Calu3 (cell line): ENCODE measurements at regions of chr6 and their contacts with region 1.

Region 1: DNA sequence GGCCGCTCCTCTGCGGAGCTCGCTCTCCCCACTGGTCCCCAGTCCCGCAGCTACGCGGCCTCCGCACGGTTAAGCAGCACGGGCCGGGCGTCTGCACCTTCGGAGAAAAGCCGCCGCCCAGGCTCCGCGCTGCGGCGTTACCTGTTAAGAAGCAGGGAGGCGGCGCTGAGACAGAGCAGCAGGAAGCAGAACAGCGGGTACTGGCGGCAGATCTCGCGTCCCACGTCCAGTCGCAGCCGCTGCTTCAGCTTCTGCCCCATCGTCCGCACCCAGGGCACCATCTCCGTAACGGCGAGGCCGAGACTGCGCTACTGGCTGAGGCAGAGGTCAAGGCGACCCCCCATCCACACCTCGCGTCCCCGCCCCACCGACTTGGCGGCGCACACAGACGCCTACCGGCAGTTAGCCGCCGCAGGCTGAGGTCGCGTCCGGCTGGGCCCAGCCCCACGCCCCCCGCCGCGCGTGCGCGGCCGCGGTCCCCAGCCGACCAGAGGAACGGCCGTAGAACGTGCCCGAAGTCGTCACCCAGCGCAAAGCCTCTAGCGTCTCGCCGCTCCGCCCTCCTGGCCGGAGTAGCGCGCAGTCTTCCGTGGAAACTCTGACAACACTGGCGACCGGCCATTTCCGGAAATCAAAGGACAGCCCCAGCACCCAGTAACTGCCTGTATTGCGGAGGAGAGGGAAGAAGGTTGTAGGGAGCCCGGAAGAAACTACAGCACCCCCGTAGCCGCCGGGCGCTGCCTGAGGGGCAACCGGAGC is at the start of gene SNX14:
- DNase-seq: peak; percentile 93
- H3K4me3 Mint-ChIP-seq: peak within 1 kb of the TSS; percentile 98
- H3K27ac Mint-ChIP-seq: peak within 1 kb of the TSS; percentile 98
- H3K4me1 Mint-ChIP-seq: peaks cover 18% of the 10 kb centered on the region
- H3K27me3 Mint-ChIP-seq: no peaks in the 10 kb centered on the region
- CTCF ChIP-seq: no peak
- total RNA-seq, gene SNX14: 63.1 and 72.9 TPM in 2 replicates

Region 2: DNA sequence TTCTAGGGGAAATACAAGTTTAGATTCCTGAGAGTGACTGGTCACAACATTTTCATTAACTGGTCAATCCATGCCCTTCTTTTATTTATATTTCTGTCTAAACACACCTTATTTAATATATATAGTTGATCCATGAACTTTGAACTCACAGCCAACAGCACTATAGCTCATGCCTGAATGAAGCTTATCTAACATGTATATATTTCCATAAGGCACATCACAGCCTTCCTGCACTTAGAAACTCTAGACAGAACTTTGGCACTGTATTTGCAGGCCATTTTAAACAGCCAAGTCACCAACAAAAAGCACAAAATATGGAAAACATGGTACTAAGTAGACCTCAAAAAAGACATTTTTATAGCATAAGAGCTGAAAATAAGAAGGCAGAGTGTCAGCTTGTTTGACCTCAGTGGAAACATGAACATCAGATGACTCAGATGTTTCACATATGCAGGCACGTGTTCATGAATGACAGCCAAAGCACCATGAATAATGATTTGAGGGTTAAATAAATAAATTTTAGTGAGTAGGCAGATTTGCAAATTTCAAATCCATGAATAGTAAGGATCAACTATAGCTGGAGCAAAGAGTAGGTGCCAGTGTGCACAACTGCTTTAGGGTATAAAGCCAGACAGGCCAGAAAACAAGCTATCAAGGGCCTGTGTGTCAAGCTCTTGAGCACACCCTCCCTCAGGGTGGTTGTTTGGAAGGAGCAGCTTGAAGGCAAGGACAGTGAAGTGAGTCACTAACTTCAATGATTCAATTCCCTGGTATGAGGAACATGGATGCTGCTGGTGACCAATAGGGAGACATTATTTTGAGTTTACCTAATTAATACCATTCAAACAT is 232.6 kb before region 1 on chr6:
- CTCF ChIA-PET with region 1: no interaction called
- intact Hi-C with region 1: loop called (anchors 5 kb)
- DNase-seq: peak; percentile 72
- H3K4me3 Mint-ChIP-seq: no peak overlapping the region
- H3K27ac Mint-ChIP-seq: peak overlapping the region; percentile 89
- H3K4me1 Mint-ChIP-seq: peaks cover 47% of the 10 kb centered on the region
- H3K27me3 Mint-ChIP-seq: no peaks in the 10 kb centered on the region
- CTCF ChIP-seq: no peak

Region 3: DNA sequence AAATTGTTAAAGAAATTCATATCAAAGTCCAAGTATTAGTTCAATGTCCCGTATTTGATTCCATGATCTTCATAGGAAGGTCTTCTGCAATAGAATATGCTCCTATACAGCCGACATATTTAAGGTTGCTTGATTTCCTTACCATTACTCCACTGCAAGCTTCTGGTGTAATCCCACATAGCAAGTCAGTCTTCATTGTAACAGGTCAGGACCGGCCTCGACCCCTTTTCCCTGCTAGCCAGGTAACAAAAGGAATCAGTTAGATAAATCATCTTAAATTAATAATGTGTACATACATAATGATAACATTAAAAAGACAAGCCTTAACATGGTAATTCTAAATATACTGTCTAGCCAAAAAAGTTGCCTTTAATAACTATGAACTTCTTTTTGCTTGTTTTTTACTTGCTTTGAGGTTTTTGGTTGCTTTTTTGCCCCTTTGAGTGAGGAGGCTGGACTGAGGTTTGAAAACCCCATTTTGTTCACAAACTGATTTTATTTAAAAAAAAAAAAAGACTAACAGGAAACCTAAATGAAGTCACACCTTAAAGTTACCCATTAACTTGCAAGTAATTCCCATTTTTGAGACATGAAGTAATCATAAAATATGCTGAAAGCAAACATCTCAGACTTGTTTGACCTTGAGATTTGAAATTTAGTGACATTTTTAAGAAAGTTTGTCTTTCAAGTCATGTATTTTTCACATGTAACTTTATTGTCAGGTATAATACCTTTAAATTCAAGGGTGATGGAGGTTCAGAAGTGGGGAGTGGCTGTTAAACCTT is 19.3 kb after region 1 on chr6:
- CTCF ChIA-PET with region 1: no interaction called
- intact Hi-C with region 1: no loop called
- DNase-seq: no peak
- H3K4me3 Mint-ChIP-seq: no peak overlapping the region
- H3K27ac Mint-ChIP-seq: peak overlapping the region; percentile 39
- H3K4me1 Mint-ChIP-seq: peaks cover 17% of the 10 kb centered on the region
- H3K27me3 Mint-ChIP-seq: no peaks in the 10 kb centered on the region
- CTCF ChIP-seq: no peak

Region 4: GRCh38 chr6:85642774-85643536 is 49.3 kb after region 1 on chr6 and contains the start of gene SYNCRIP:
- CTCF ChIA-PET with region 1: no interaction called
- intact Hi-C with region 1: loop called (anchors 5 kb)
- DNase-seq: peak; percentile 99
- H3K4me3 Mint-ChIP-seq: peak within 1 kb of the TSS; percentile 88
- H3K27ac Mint-ChIP-seq: peak within 1 kb of the TSS; percentile 89
- H3K4me1 Mint-ChIP-seq: peaks cover 46% of the 10 kb centered on the region
- H3K27me3 Mint-ChIP-seq: no peaks in the 10 kb centered on the region
- CTCF ChIP-seq: no peak
- total RNA-seq, gene SYNCRIP: 153 and 164 TPM in 2 replicates

Region 5: GRCh38 chr6:85669735-85670194 is 76.1 kb after region 1 on chr6:
- CTCF ChIA-PET with region 1: no interaction called
- intact Hi-C with region 1: loop called (anchors 2 kb)
- DNase-seq: peak; percentile 13
- H3K4me3 Mint-ChIP-seq: no peak overlapping the region
- H3K27ac Mint-ChIP-seq: no peak overlapping the region
- H3K4me1 Mint-ChIP-seq: peaks cover 29% of the 10 kb centered on the region
- H3K27me3 Mint-ChIP-seq: no peaks in the 10 kb centered on the region
- CTCF ChIP-seq: no peak

Region 6: DNA sequence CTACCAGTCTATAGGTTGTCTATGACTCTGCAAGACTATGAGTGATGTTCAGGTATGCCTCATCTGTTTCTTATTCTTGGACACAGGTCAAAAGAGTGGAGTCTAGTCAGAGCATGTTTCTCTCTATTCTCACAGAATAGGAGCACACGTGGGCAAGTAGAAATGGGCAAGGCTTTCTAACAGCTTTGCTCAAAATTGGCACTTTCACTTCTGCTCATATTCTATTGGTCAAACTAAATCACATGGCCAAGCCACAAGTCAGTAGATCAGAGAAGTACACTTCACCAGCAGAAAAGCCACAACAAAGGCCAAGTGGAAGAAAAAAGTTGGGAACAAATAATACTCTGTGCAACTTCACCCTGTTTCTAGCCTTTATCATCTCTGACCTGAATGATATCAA is 403.6 kb after region 1 on chr6:
- CTCF ChIA-PET with region 1: no interaction called
- intact Hi-C with region 1: no loop called
- DNase-seq: no peak
- H3K4me3 Mint-ChIP-seq: no peak overlapping the region
- H3K27ac Mint-ChIP-seq: no peak overlapping the region
- H3K4me1 Mint-ChIP-seq: no peaks in the 10 kb centered on the region
- H3K27me3 Mint-ChIP-seq: no peaks in the 10 kb centered on the region
- CTCF ChIP-seq: no peak